ENCODE measurements at regions of chr21 and their contacts with region 1.

Region 1: GRCh38 chr21:34888569-34889319 is 160.4 kb downstream of the RUNX1 start:
- DNase-seq: peak; percentile 59 to 90 (median 62)
- ATAC-seq: peak; percentile 61
- H3K4me3 ChIP-seq: peak overlapping the region; percentile 72
- H3K4me3 Mint-ChIP-seq: peak overlapping the region; percentile 89 to 100 (median 96)
- H3K27ac ChIP-seq: peak overlapping the region; percentile 86
- H3K27ac Mint-ChIP-seq: peak overlapping the region; percentile 95 to 100 (median 99)
- H3K4me1 ChIP-seq: peaks cover 22 to 25% of the 10 kb centered on the region in 2 donors
- H3K4me1 Mint-ChIP-seq: peaks cover 15 to 70% (median 61%) of the 10 kb centered on the region in 7 donors
- H3K27me3 ChIP-seq: no peaks in the 10 kb centered on the region
- H3K27me3 Mint-ChIP-seq: peaks cover 0 to 16% (median 0%) of the 10 kb centered on the region in 5 donors

Region 2: DNA sequence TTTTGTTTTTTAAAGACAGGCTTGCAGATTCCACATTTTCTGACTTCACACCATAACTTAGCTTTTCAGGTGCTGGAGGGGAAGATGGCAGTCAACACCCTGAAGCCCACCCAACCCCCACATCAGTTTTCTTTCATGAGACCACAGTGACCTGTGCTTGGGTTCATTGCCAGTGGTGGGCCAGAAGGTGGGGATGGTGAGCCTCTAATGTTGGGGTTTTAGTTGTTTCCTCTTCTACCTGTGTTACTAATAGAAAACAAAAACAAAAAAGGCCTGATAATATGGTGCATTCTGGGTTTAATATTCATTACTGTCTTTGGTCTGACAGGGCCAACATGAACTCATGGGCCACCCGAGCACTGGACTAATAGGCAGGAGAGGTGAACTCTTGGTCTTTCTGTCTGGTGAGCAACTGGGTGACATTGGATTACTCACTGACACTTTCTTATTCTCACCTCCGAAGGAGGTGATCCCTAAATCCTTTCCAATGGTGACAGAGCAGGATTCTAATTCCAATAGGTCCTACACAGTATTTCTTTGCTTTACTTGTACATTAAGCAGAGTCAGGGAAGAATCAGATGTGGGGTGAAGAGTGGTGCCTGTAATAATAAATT is 87.1 kb before region 1 on chr21:
- CTCF ChIA-PET with region 1: no interaction called
- POLR2A ChIA-PET with region 1: no interaction called
- intact Hi-C with region 1: loop called in 1 of 2 experiments (anchors 5 kb)
- DNase-seq: no peak
- ATAC-seq: peak; percentile 48
- H3K4me3 ChIP-seq: no peak overlapping the region
- H3K4me3 Mint-ChIP-seq: no peak overlapping the region
- H3K27ac ChIP-seq: no peak overlapping the region
- H3K27ac Mint-ChIP-seq: peak overlapping the region in 8 of 9 donors; percentile 22 to 84 (median 68)
- H3K4me1 ChIP-seq: no peaks in the 10 kb centered on the region
- H3K4me1 Mint-ChIP-seq: peaks cover 18 to 44% (median 32%) of the 10 kb centered on the region in 7 donors
- H3K27me3 ChIP-seq: no peaks in the 10 kb centered on the region
- H3K27me3 Mint-ChIP-seq: no peaks in the 10 kb centered on the region

Region 3: GRCh38 chr21:34836103-34836932 is 52.4 kb before region 1 on chr21:
- CTCF ChIA-PET with region 1: no interaction called
- POLR2A ChIA-PET with region 1: no interaction called
- intact Hi-C with region 1: no loop called
- DNase-seq: no peak
- ATAC-seq: peak; percentile 80
- H3K4me3 ChIP-seq: no peak overlapping the region
- H3K4me3 Mint-ChIP-seq: no peak overlapping the region
- H3K27ac ChIP-seq: no peak overlapping the region
- H3K27ac Mint-ChIP-seq: peak overlapping the region in 7 of 9 donors; percentile 2 to 80 (median 25)
- H3K4me1 ChIP-seq: peaks cover 15 to 19% of the 10 kb centered on the region in 2 donors
- H3K4me1 Mint-ChIP-seq: peaks cover 26 to 57% (median 45%) of the 10 kb centered on the region in 7 donors
- H3K27me3 ChIP-seq: no peaks in the 10 kb centered on the region
- H3K27me3 Mint-ChIP-seq: no peaks in the 10 kb centered on the region

Region 4: GRCh38 chr21:34974162-34974981 is 85.6 kb after region 1 on chr21:
- CTCF ChIA-PET with region 1: interaction called, 5 read pairs
- POLR2A ChIA-PET with region 1: interaction called, 3 read pairs
- intact Hi-C with region 1: loop called in 1 of 2 experiments (anchors 1 kb)
- DNase-seq: peak in 8 of 9 donors; percentile 47 to 81 (median 74)
- ATAC-seq: peak; percentile 91
- H3K4me3 ChIP-seq: peak overlapping the region; percentile 36
- H3K4me3 Mint-ChIP-seq: peak overlapping the region; percentile 78 to 92 (median 86)
- H3K27ac ChIP-seq: peak overlapping the region; percentile 70
- H3K27ac Mint-ChIP-seq: peak overlapping the region; percentile 69 to 98 (median 93)
- H3K4me1 ChIP-seq: peaks cover 49 to 61% of the 10 kb centered on the region in 2 donors
- H3K4me1 Mint-ChIP-seq: peaks cover 65 to 94% (median 89%) of the 10 kb centered on the region in 7 donors
- H3K27me3 ChIP-seq: no peaks in the 10 kb centered on the region
- H3K27me3 Mint-ChIP-seq: peaks cover 0 to 45% (median 0%) of the 10 kb centered on the region in 5 donors

Region 5: GRCh38 chr21:35102488-35103371 is 214.0 kb after region 1 on chr21:
- CTCF ChIA-PET with region 1: interaction called, 3 read pairs
- POLR2A ChIA-PET with region 1: no interaction called
- intact Hi-C with region 1: loop called in 1 of 2 experiments (anchors 5 kb)
- DNase-seq: peak in 8 of 9 donors; percentile 13 to 81 (median 78)
- ATAC-seq: peak; percentile 98
- H3K4me3 ChIP-seq: peak overlapping the region; percentile 34
- H3K4me3 Mint-ChIP-seq: no peak overlapping the region
- H3K27ac ChIP-seq: peak overlapping the region; percentile 52
- H3K27ac Mint-ChIP-seq: no peak overlapping the region
- H3K4me1 ChIP-seq: peaks cover 0 to 16% of the 10 kb centered on the region in 2 donors
- H3K4me1 Mint-ChIP-seq: peaks cover 0 to 4% (median 0%) of the 10 kb centered on the region in 7 donors
- H3K27me3 ChIP-seq: no peaks in the 10 kb centered on the region
- H3K27me3 Mint-ChIP-seq: no peaks in the 10 kb centered on the region

Region 6: GRCh38 chr21:35508139-35508888 is 619.6 kb after region 1 on chr21:
- CTCF ChIA-PET with region 1: no interaction called
- POLR2A ChIA-PET with region 1: no interaction called
- intact Hi-C with region 1: loop called in 1 of 2 experiments (anchors 1 kb)
- DNase-seq: peak in 2 of 9 donors; percentile 18 to 25
- ATAC-seq: peak; percentile 77
- H3K4me3 ChIP-seq: no peak overlapping the region
- H3K4me3 Mint-ChIP-seq: peak overlapping the region in 1 of 10 donors; percentile 23
- H3K27ac ChIP-seq: no peak overlapping the region
- H3K27ac Mint-ChIP-seq: peak overlapping the region in 6 of 9 donors; percentile 38 to 70 (median 60)
- H3K4me1 ChIP-seq: peaks cover 0 to 37% of the 10 kb centered on the region in 2 donors
- H3K4me1 Mint-ChIP-seq: peaks cover 30 to 77% (median 70%) of the 10 kb centered on the region in 7 donors
- H3K27me3 ChIP-seq: no peaks in the 10 kb centered on the region
- H3K27me3 Mint-ChIP-seq: peaks cover 0 to 3% (median 0%) of the 10 kb centered on the region in 5 donors

Region 7: DNA sequence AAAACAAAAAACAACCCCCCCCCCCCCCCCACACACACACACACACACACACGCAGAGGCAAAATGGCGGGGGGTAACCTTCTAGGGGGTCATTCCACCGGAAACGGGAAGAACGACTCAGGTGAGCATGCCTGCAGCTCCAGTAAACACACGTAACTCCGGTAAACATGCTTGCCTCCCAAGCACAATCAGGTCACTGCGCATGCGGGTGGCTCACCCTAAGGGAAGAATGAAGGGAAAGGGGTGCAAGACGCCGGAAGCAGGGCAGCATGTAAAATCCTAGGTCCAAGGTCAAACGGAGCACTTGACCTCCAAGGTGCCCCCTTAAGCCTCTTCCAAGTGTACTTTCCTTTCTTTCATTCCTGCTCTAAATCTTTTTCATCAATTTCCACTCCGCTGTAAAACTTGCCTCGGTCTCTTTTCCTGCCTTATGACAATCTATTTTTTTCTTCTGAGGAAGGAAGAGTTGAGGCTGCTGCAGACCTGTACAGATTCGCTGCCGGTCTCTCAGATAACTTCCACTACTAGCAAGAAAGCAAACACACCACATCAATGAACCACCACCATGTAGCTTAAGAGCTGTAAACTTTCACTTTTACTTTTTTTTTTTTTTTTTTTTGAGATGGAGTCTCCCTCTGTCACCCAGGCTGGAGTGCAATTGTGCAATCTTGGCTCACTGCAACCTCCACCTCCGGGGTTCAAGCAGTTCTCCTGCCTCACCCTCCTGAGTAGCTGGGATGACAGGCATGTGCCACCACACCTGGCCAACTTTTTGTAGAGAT is 1225.1 kb after region 1 on chr21:
- CTCF ChIA-PET with region 1: no interaction called
- POLR2A ChIA-PET with region 1: no interaction called
- intact Hi-C with region 1: loop called in 1 of 2 experiments (anchors 2 kb)
- DNase-seq: peak in 8 of 9 donors; percentile 49 to 90 (median 74)
- ATAC-seq: peak; percentile 92
- H3K4me3 ChIP-seq: peak overlapping the region; percentile 64
- H3K4me3 Mint-ChIP-seq: peak overlapping the region; percentile 67 to 100 (median 88)
- H3K27ac ChIP-seq: peak overlapping the region; percentile 72
- H3K27ac Mint-ChIP-seq: peak overlapping the region; percentile 85 to 98 (median 92)
- H3K4me1 ChIP-seq: peaks cover 0 to 19% of the 10 kb centered on the region in 2 donors
- H3K4me1 Mint-ChIP-seq: peaks cover 16 to 45% (median 28%) of the 10 kb centered on the region in 7 donors
- H3K27me3 ChIP-seq: no peaks in the 10 kb centered on the region
- H3K27me3 Mint-ChIP-seq: peaks cover 0 to 10% (median 0%) of the 10 kb centered on the region in 5 donors